Activated CD4-positive, alpha-beta memory T cell treated with anti-CD3 and anti-CD28 coated beads for 36 hours (primary cell): ENCODE measurements at regions of chr6 and their contacts with region 1.

Region 1: DNA sequence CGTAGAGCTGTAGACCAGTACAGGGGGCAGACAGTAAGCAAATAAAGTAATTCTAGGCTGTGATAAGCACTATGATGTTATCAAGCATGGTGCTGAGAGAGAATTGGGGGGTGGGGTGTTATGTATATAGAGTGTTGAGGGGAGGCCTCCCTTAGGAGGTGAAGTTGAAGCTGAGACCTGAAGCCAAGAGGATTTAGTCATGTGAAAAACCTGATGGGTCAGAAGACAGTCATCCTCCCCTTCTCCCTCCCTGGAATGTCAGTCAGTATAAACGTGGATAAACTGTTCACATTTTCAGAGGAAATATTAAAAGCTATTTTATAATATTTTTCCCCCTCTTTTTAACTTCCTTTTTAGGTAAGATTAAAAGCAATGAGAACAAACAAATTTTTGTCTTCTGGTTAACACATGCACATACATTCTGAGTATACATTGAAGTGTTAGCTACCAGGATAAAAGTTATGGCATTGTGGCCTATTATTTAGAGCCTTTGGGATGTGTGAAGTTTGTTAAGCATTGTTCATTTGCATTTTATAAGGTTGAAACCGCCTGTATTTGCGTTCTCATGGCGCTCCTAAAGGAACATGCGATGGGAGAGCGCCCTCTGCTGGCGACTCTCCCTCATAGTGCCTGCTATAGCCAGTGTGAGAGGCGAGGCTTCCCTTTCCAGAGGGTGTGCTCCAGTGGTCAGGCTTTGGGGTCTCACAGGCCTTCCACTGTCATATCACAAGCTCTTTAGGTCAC is 35.4 kb upstream of the MAPK13 start:
- DNase-seq: peak; percentile 89
- H3K4me3 Mint-ChIP-seq: no peak overlapping the region
- H3K27ac Mint-ChIP-seq: peak overlapping the region; percentile 67
- H3K4me1 Mint-ChIP-seq: peaks cover 28% of the 10 kb centered on the region
- H3K27me3 Mint-ChIP-seq: no peaks in the 10 kb centered on the region

Region 2: DNA sequence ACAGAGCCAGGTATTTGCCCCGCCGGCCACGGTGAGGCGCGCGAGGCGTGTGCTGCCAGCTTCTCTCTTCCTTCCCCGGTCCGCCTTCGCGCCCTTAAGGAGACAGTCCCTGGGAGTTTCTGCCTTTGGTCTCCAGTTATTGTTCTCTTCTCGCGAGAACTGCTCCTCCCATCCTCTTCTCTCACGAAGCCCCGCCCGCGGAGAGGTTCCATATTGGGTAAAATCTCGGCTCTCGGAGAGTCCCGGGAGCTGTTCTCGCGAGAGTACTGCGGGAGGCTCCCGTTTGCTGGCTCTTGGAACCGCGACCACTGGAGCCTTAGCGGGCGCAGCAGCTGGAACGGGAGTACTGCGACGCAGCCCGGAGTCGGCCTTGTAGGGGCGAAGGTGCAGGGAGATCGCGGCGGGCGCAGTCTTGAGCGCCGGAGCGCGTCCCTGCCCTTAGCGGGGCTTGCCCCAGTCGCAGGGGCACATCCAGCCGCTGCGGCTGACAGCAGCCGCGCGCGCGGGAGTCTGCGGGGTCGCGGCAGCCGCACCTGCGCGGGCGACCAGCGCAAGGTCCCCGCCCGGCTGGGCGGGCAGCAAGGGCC is 67.3 kb before region 1 on chr6 and contains the start of gene MAPK14:
- CTCF ChIA-PET with region 1: interaction called, 237 read pairs
- POLR2A ChIA-PET with region 1: interaction called, 22 read pairs
- intact Hi-C with region 1: loop called (anchors 1 kb)
- DNase-seq: peak; percentile 99
- H3K4me3 Mint-ChIP-seq: peak within 1 kb of the TSS; percentile 98
- H3K27ac Mint-ChIP-seq: peak within 1 kb of the TSS; percentile 97
- H3K4me1 Mint-ChIP-seq: peaks cover 28% of the 10 kb centered on the region
- H3K27me3 Mint-ChIP-seq: peaks cover 12% of the 10 kb centered on the region
- total RNA-seq, gene MAPK14: 39.3 to 44.0 TPM

Region 3: DNA sequence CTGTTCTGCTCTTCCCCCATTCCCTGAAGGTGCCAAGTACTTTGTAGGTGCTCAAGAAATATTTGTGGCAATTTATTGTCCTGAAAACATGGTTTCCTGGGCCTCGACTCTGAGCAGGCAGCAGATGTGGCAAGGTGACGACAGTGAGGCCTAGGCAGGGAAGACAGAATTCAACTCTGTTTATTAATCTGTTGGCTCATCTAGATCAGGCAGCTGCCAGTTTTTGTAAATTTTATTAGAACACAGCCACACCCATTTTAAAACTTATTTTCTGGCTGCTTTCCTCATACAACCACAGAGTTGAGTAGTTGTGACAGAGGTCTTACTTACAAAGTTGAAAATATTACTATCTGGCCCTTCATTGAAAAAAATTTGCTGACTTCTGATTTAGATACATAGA is 42.8 kb before region 1 on chr6:
- CTCF ChIA-PET with region 1: interaction called, 11 read pairs
- POLR2A ChIA-PET with region 1: no interaction called
- intact Hi-C with region 1: no loop called
- DNase-seq: no peak
- H3K4me3 Mint-ChIP-seq: no peak overlapping the region
- H3K27ac Mint-ChIP-seq: no peak overlapping the region
- H3K4me1 Mint-ChIP-seq: peaks cover 6% of the 10 kb centered on the region
- H3K27me3 Mint-ChIP-seq: no peaks in the 10 kb centered on the region

Region 4: GRCh38 chr6:36075656-36076055 is 19.3 kb before region 1 on chr6:
- CTCF ChIA-PET with region 1: interaction called, 28 read pairs
- POLR2A ChIA-PET with region 1: no interaction called
- intact Hi-C with region 1: no loop called
- DNase-seq: no peak
- H3K4me3 Mint-ChIP-seq: no peak overlapping the region
- H3K27ac Mint-ChIP-seq: no peak overlapping the region
- H3K4me1 Mint-ChIP-seq: peaks cover 21% of the 10 kb centered on the region
- H3K27me3 Mint-ChIP-seq: no peaks in the 10 kb centered on the region

Region 5: GRCh38 chr6:36109092-36109491 is 14.2 kb after region 1 on chr6:
- CTCF ChIA-PET with region 1: interaction called, 29 read pairs
- POLR2A ChIA-PET with region 1: no interaction called
- intact Hi-C with region 1: no loop called
- DNase-seq: no peak
- H3K4me3 Mint-ChIP-seq: no peak overlapping the region
- H3K27ac Mint-ChIP-seq: peak overlapping the region; percentile 69
- H3K4me1 Mint-ChIP-seq: peaks cover 37% of the 10 kb centered on the region
- H3K27me3 Mint-ChIP-seq: no peaks in the 10 kb centered on the region

Region 6: GRCh38 chr6:36123257-36124139 is 28.6 kb after region 1 on chr6:
- CTCF ChIA-PET with region 1: interaction called, 14 read pairs
- POLR2A ChIA-PET with region 1: interaction called, 5 read pairs
- intact Hi-C with region 1: loop called (anchors 1 kb)
- DNase-seq: peak; percentile 96
- H3K4me3 Mint-ChIP-seq: no peak overlapping the region
- H3K27ac Mint-ChIP-seq: peak overlapping the region; percentile 59
- H3K4me1 Mint-ChIP-seq: peaks cover 78% of the 10 kb centered on the region
- H3K27me3 Mint-ChIP-seq: no peaks in the 10 kb centered on the region